ENCODE measurements at regions of chr3 and their contacts with region 1.

Region 1: GRCh38 chr3:158434412-158435038 is 136.5 kb upstream of the MLF1 start:
- DNase-seq: peak; percentile 76
- ATAC-seq: peak; percentile 90

Region 2: DNA sequence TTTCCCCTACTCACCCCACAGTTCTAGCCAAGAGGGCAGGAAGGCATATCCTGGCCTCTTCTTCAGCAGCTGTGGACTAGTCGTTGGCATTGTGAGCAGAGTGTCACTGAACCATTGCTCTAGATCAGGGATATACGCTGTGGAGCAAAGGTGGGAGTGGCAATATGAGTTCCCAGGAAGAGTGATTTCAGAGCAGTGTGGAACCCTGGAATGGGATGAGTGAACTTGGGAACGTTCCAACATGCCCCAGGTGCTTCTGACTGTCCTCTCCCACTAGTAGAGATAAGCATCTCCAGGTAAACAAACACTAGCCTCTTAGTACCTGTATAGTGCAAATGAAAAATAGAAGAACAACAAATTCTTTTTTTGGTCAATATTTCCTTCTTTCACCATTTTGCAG is 807.7 kb before region 1 on chr3:
- intact Hi-C with region 1: loop called (anchors 10 kb)
- DNase-seq: no peak
- ATAC-seq: no peak

Region 3: GRCh38 chr3:158488670-158489069 is 54.1 kb after region 1 on chr3:
- intact Hi-C with region 1: no loop called
- DNase-seq: no peak
- ATAC-seq: no peak

Measured in sciatic nerve (tissue), 2 donors.